Activated CD4-positive, alpha-beta T cell treated with anti-CD3 and anti-CD28 coated beads, Interleukin-2, amount 10 ng/mL, durations not matched to agents 24 days and 14 days (primary cell): ENCODE measurements at regions of chr2 and their contacts with region 1.

Region 1: GRCh38 chr2:68185541-68186164 is 28.0 kb downstream of the PNO1 start:
- DNase-seq: peak; percentile 84
- H3K4me3 Mint-ChIP-seq: no peak overlapping the region
- H3K27ac Mint-ChIP-seq: no peak overlapping the region
- H3K4me1 Mint-ChIP-seq: peaks cover 15% of the 10 kb centered on the region
- H3K27me3 Mint-ChIP-seq: no peaks in the 10 kb centered on the region

Region 2: DNA sequence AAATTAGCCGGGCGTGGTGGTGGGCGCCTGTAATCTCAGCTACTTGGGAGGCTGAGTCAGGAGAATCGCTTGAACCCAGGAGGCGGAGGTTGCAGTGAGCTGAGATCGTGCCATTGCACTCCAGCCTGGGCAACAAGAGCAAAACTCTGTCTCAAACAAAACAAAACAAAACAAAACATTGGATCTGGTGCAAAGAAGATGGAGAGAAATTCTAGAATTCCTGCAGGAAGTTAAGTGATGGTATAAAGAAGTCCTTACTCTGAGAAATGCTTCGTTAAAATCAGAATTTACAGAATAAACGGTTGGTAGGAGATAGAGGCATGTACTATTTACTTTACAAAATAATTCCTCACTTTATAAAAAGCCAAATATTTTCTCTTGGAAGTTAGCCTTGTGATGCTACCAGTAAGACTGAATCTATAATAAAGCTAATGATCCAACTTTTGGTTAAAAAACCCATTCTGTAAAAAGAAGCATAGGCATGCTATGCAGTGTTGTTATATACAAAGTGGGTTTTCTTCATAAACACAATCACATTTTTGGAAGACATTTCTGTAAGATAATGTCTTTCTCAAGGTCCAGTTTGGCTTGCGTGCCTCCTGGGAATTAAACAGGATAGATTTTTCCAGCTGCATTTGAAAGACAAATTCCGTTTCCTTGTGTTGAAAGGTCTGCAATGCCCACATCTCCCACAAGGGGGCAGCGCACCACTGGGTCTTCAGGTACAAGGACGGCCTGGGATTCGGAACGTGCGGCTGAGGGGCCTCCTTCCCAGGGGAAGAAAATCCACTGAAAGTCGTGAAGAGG is 63.6 kb before region 1 on chr2:
- intact Hi-C with region 1: loop called (anchors 1 kb)
- DNase-seq: peak; percentile 92
- H3K4me3 Mint-ChIP-seq: no peak overlapping the region
- H3K27ac Mint-ChIP-seq: no peak overlapping the region
- H3K4me1 Mint-ChIP-seq: peaks cover 4% of the 10 kb centered on the region
- H3K27me3 Mint-ChIP-seq: peaks cover 2% of the 10 kb centered on the region